IMR-90 (cell line): ENCODE measurements at regions of chr6 and their contacts with region 1.

Region 1: DNA sequence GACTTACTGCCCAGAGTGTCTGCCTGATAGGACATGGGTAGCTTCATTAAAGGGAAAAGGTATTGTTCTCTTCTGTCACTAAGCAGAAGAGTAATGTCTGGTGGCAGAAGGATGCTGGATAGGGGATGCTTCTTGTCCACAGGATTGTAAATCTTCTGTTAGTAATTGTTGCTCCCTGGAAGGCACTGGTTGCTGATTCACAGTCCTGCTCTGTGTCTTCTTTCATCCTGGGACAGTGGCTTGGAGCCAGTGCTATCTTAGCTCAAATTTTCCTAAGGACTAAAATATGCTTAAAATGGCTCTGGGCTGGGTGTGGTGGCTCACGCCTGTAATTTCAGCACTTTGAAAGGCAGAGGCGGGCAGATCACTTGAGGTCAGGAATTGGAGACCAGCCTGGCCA is 48.0 kb downstream of the SYTL3 start:
- DNase-seq: peak; percentile 72
- ATAC-seq: peak; percentile 88
- H3K4me3 ChIP-seq: no peak overlapping the region
- H3K27ac ChIP-seq: no peak overlapping the region
- H3K4me1 ChIP-seq: peaks cover 5% of the 10 kb centered on the region
- H3K27me3 ChIP-seq: no peaks in the 10 kb centered on the region
- CTCF ChIP-seq: no peak
- POLR2A ChIP-seq: no peak
- RAD21 ChIP-seq: no peak

Region 2: DNA sequence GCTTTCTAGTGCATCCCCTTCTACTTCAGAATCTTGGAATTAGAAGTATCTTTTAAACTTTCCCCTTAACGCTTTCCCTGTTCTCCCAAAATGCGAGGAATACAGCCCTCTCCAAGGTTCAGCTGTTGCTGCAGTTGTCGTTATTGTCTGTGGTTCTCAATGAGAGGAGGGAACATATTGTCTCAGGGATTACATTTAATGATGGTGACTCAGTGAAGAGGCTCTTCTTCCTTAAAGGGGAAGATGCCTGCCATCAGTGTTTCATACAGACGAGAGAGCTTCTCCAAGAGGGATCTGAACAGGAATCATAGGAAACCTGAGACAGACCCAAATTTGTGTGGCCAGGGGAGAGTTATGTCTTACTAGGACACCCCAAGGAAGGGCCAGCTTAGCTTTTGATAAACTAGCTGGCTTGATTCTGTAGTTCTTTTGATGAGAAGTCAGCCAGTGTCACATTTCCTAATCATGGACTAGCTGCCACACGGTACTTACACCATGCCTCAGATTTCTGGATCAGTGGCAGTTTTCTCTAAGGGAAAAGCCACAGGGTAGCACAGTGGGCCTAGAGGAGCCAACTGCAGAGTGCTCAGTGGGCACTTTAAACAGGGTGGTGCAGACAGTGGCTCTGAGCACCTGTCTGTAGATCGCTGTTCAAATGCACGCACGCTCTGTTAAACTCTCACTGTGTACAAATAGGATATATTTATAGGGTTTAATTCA is 197.6 kb before region 1 on chr6:
- CTCF ChIA-PET with region 1: no interaction called
- POLR2A ChIA-PET with region 1: no interaction called
- dilution Hi-C with region 1: no loop called
- in situ Hi-C with region 1: no loop called
- intact Hi-C with region 1: no loop called
- DNase-seq: peak; percentile 59
- ATAC-seq: peak; percentile 98
- H3K4me3 ChIP-seq: no peak overlapping the region
- H3K27ac ChIP-seq: no peak overlapping the region
- H3K4me1 ChIP-seq: peaks cover 5% of the 10 kb centered on the region
- H3K27me3 ChIP-seq: no peaks in the 10 kb centered on the region
- CTCF ChIP-seq: no peak
- POLR2A ChIP-seq: no peak
- RAD21 ChIP-seq: no peak

Region 3: DNA sequence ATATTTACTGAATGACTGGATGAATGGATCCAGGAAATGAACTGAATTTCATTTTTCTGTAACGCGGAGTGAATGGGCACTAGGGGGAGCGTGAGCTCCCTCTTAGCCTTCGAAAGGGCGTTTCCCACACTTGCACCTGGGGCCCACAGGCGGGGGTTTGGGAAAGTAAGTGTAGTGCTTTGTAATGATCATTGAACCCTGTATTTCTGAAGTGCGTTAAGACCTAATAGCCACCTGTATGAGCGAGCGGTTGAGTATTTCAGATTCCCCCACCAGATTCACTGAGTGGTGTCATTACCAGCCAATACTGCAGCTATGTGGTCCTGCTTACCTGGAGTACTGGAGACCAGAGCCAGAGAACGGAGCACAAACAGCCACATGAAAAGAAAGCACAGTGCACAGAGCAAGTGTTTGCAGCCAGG is 37.5 kb before region 1 on chr6:
- CTCF ChIA-PET with region 1: no interaction called
- POLR2A ChIA-PET with region 1: no interaction called
- dilution Hi-C with region 1: no loop called
- in situ Hi-C with region 1: no loop called
- intact Hi-C with region 1: loop called (anchors 5 kb)
- DNase-seq: no peak
- ATAC-seq: 0 out of 2 replicates have a peak, but pooled peaks have one; percentile 52
- H3K4me3 ChIP-seq: no peak overlapping the region
- H3K27ac ChIP-seq: no peak overlapping the region
- H3K4me1 ChIP-seq: peaks cover 15% of the 10 kb centered on the region
- H3K27me3 ChIP-seq: no peaks in the 10 kb centered on the region
- CTCF ChIP-seq: peak; percentile 49
- POLR2A ChIP-seq: no peak
- RAD21 ChIP-seq: peak; percentile 40